Endothelial cell of umbilical vein (primary cell): ENCODE measurements at regions of chr17 and their contacts with region 1.

Region 1: DNA sequence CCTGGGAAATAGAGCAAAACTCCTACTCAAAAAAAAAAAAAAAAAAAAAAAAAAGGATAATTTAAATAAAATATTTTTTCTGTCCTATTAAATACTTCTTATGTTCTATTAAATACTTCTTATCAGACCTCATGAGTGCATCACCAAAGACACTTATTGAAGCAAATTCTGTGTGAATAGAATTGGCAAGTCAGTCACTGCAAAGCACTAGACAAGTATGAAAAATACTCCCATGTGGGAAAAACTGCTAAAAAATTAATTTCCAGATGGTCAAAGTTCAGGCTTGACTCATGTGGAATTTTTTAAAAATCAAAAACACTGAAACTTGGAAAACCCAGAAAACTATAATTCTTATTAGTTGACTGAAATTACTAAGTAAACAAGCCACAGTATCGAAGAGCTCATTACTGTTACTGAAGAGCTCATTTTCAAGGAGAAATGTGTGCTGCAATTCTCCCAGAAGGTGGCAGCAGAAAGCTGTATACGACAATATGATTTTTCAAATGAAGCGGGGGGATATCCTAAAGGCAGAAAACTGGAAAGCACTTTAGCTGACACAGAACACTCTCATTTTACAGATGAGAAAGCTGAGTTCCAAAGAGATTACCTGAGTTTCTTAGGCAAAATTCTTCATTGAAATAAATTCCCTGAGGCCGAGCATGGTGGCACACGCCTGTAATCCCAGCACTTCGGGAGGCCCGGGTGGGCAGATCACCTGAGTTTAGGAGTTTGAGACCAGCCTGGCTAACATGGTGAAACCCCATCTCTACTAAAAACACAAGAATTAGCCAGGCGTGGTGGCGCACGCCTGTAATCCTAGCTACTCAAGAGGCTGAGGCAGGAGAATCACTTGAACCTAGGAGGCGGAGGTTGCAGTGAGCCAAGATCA is 15.9 kb upstream of the FBXO47 start:
- DNase-seq: peak; percentile 74
- H3K4me3 ChIP-seq: no peak overlapping the region
- H3K27ac ChIP-seq: no peak overlapping the region
- H3K4me1 ChIP-seq: no peaks in the 10 kb centered on the region
- H3K27me3 ChIP-seq: no peaks in the 10 kb centered on the region
- CTCF ChIP-seq: peak; percentile 62 to 63
- POLR2A ChIP-seq: no peak

Region 2: DNA sequence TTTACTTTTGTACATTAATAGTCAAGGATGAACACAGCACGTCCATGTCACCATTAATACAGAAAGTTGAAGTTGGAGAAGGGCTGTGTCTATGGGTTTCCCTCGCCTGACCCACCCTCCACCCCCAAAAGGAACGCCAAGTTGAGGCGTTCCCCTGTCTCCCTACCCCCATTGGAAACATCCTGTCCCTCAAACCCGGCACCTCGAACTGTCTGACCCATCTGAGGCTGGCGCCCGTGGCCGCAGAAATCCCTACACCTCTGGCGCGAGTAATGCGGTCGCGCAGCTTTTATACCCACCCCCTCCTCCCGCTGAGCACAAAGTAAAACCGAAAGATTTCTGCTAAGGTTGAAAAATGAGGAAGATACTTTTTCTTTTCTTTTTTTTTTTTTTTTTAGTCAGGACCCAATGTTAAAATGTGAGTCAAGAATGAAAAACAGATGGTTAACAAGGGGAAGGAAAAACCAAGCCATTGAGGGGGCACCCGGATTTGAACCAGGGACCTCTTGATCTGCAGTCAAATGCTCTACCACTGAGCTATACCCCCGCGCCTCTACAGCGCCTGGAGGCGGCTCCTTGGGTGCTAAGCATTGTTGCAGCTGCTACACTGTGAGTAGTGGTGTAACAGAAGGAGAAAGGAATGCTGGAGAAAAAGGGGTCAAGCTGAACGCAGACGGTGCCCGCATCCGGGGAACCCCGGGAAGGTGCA is 114.1 kb before region 1 on chr17:
- CTCF ChIA-PET with region 1: interaction called, 37 read pairs
- POLR2A ChIA-PET with region 1: interaction called, 3 read pairs
- dilution Hi-C with region 1: no loop called
- intact Hi-C with region 1: loop called (anchors 5 kb)
- DNase-seq: peak; percentile 88
- H3K4me3 ChIP-seq: peak overlapping the region; percentile 74 to 93 (median 84)
- H3K27ac ChIP-seq: peak overlapping the region; percentile 24
- H3K4me1 ChIP-seq: peaks cover 38% of the 10 kb centered on the region
- H3K27me3 ChIP-seq: no peaks in the 10 kb centered on the region
- CTCF ChIP-seq: peak in 1 of 2 donors; percentile 17
- POLR2A ChIP-seq: no peak

Region 3: DNA sequence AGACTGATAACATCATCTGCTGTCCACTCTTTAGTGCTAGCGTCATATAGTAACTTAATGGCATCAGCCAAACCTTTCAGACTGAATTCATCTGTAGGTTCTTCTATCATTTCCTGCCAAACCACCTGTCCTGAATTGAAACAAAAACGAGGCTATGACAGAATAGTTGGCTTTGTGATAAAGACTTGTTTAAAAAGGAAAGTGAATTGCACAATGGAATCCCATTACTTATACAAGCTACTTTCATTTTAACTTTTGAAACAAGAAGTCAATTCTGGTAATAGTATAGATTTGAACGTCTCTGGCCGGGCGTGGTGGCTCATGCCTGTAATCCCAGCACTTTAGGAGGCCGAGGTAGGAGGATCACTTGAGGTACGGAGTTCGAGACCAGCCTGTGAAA is 39.5 kb before region 1 on chr17:
- CTCF ChIA-PET with region 1: interaction called, 10 read pairs
- POLR2A ChIA-PET with region 1: no interaction called
- dilution Hi-C with region 1: no loop called
- intact Hi-C with region 1: no loop called
- DNase-seq: no peak
- H3K4me3 ChIP-seq: no peak overlapping the region
- H3K27ac ChIP-seq: no peak overlapping the region
- H3K4me1 ChIP-seq: no peaks in the 10 kb centered on the region
- H3K27me3 ChIP-seq: no peaks in the 10 kb centered on the region
- CTCF ChIP-seq: no peak
- POLR2A ChIP-seq: no peak

Region 4: GRCh38 chr17:39001703-39002637 is 18.9 kb after region 1 on chr17:
- CTCF ChIA-PET with region 1: interaction called, 22 read pairs
- POLR2A ChIA-PET with region 1: no interaction called
- dilution Hi-C with region 1: no loop called
- intact Hi-C with region 1: no loop called
- DNase-seq: peak; percentile 35
- H3K4me3 ChIP-seq: no peak overlapping the region
- H3K27ac ChIP-seq: no peak overlapping the region
- H3K4me1 ChIP-seq: peaks cover 11% of the 10 kb centered on the region
- H3K27me3 ChIP-seq: peaks cover 0 to 2% of the 10 kb centered on the region in 2 experiments
- CTCF ChIP-seq: no peak
- POLR2A ChIP-seq: no peak

Region 5: GRCh38 chr17:39057701-39058206 is 74.7 kb after region 1 on chr17:
- CTCF ChIA-PET with region 1: interaction called, 29 read pairs
- POLR2A ChIA-PET with region 1: no interaction called
- dilution Hi-C with region 1: no loop called
- intact Hi-C with region 1: no loop called
- DNase-seq: no peak
- H3K4me3 ChIP-seq: no peak overlapping the region
- H3K27ac ChIP-seq: no peak overlapping the region
- H3K4me1 ChIP-seq: no peaks in the 10 kb centered on the region
- H3K27me3 ChIP-seq: peaks cover 6 to 13% of the 10 kb centered on the region in 2 experiments
- CTCF ChIP-seq: no peak
- POLR2A ChIP-seq: no peak

Region 6: DNA sequence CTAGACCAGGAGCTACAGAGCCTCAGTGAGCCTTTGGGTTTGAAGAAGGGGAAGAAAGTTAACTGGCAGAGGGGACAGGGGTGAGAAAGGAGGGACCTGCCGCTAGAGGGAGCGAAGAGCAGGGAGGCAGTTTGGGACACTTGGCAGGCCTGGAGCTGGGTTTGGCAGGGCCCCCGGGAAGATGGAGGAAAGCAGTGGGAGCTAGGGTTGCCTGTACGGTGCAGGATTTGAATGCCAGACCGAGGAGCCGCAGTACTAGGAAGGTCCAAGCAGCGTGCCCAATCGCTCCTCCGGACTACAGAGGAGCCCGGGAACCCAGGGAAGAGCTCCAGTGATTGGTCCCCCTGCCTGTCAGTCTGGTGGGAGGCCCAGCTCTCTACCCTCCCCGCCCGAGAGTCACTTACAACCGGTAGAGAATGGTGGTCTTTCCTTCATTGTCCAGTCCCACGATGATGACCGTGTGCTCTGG is 181.6 kb after region 1 on chr17:
- CTCF ChIA-PET with region 1: interaction called, 35 read pairs
- POLR2A ChIA-PET with region 1: no interaction called
- dilution Hi-C with region 1: no loop called
- intact Hi-C with region 1: no loop called
- DNase-seq: peak; percentile 86
- H3K4me3 ChIP-seq: peak overlapping the region; percentile 2 to 54 (median 36)
- H3K27ac ChIP-seq: no peak overlapping the region
- H3K4me1 ChIP-seq: peaks cover 5% of the 10 kb centered on the region
- H3K27me3 ChIP-seq: peaks cover 27 to 31% of the 10 kb centered on the region in 2 experiments
- CTCF ChIP-seq: peak; percentile 70 to 89
- POLR2A ChIP-seq: no peak

Region 7: DNA sequence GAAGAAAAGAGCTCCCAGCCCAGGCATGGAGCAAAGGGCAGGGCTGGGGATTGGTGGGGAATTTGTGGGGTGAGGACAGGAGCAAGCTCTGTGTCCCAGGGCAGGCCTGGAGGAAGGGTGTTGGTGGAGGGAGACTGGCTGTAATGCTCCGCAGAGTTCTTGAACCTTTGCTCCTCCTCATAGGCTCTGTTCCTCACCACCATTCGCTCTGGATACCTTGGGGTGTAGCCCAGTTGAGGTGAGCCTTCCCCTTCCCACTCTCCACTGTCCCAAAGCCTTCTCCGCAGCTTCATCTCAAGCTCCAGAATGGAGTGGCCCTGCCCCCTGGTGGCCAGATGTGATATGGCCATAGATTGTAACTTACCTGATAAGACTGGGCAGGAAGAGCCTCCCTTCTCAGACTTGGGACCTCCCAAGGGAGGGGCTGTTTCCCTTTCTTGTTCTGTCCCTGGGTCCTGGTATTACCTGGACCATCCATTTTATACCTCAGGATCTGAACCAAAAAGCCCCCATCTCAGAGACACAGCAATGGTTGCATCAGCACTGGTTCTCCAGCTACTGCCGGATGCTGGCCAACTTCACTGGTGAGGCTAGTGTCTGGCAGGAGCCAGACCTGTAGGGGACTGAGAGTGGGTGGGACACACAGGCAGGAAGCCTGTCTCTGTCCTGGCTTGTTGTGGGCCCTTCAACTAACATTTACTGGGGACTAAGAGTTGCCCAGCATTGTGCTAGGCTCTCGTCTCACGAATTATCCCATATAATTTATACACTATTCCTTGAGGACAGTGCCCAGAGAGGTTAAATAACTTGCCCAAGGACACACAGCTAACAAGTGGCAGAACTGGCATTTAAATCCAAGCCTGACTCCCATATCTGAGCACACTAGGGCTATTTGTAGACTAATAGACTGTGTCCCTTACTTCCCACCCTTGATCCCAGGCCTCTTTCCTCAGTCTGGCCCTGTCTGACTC is 261.8 kb after region 1 on chr17:
- CTCF ChIA-PET with region 1: interaction called, 88 read pairs
- POLR2A ChIA-PET with region 1: no interaction called
- dilution Hi-C with region 1: no loop called
- intact Hi-C with region 1: loop called (anchors 1 kb)
- DNase-seq: peak; percentile 82
- H3K4me3 ChIP-seq: no peak overlapping the region
- H3K27ac ChIP-seq: no peak overlapping the region
- H3K4me1 ChIP-seq: no peaks in the 10 kb centered on the region
- H3K27me3 ChIP-seq: no peaks in the 10 kb centered on the region
- CTCF ChIP-seq: peak; percentile 84 to 92
- POLR2A ChIP-seq: no peak